Body of pancreas (tissue), 4 donors: ENCODE measurements at regions of chr17 and their contacts with region 1.

Region 1: GRCh38 chr17:15257258-15257788 is 7.8 kb downstream of the PMP22 start:
- DNase-seq: peak; percentile 77 to 83 (median 80)
- ATAC-seq: peak; percentile 54
- H3K4me3 ChIP-seq: no peak overlapping the region
- H3K27ac ChIP-seq: no peak overlapping the region
- H3K4me1 ChIP-seq: peaks cover 32% of the 10 kb centered on the region
- H3K27me3 ChIP-seq: peaks cover 0 to 11% of the 10 kb centered on the region in 2 donors
- CTCF ChIP-seq: peak; percentile 68 to 82 (median 79)
- POLR2A ChIP-seq: no peak

Region 2: GRCh38 chr17:15502369-15503112 is 245.2 kb after region 1 on chr17:
- intact Hi-C with region 1: loop called (anchors 10 kb)
- DNase-seq: peak; percentile 65 to 76 (median 74)
- ATAC-seq: peak; percentile 85
- H3K4me3 ChIP-seq: no peak overlapping the region
- H3K27ac ChIP-seq: no peak overlapping the region
- H3K4me1 ChIP-seq: peaks cover 7% of the 10 kb centered on the region
- H3K27me3 ChIP-seq: no peaks in the 10 kb centered on the region
- CTCF ChIP-seq: peak; percentile 23 to 72 (median 61)
- POLR2A ChIP-seq: no peak